Calu3 (cell line): ENCODE measurements at regions of chr12 and their contacts with region 1.

Region 1: DNA sequence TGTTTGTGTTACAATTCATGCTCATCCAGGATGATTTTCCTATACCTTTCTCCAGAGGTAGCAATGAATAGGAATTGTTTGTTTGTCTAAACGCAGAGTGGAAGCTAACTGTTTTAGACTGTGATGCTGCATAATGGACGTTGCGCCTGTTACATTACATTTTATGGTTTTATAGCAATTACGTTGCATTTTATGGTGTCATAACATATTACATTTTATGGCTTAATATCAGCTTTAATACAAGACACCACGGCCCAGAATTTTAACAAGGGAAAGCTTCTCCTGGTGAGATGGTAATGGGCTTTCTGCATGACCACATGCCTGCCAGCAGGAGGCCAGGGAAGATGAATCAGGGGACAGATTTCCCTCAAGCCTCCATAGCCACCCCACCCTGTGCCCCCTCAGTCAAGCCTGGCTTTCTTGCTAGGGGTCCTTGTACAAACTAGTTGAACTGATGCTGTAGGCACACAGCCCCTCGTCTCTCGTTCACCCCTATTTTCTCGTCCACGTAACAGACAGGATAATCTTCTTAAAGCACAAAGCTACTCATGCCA is 56.5 kb downstream of the HSPB8 start:
- DNase-seq: peak; percentile 7
- H3K4me3 Mint-ChIP-seq: no peak overlapping the region
- H3K27ac Mint-ChIP-seq: no peak overlapping the region
- H3K4me1 Mint-ChIP-seq: no peaks in the 10 kb centered on the region
- H3K27me3 Mint-ChIP-seq: peaks cover 79% of the 10 kb centered on the region
- CTCF ChIP-seq: no peak

Region 2: GRCh38 chr12:119115296-119115905 is 119.9 kb before region 1 on chr12:
- CTCF ChIA-PET with region 1: no interaction called
- intact Hi-C with region 1: loop called (anchors 5 kb)
- DNase-seq: peak; percentile 63
- H3K4me3 Mint-ChIP-seq: no peak overlapping the region
- H3K27ac Mint-ChIP-seq: no peak overlapping the region
- H3K4me1 Mint-ChIP-seq: no peaks in the 10 kb centered on the region
- H3K27me3 Mint-ChIP-seq: peaks cover 28% of the 10 kb centered on the region
- CTCF ChIP-seq: peak; percentile 87

Region 3: DNA sequence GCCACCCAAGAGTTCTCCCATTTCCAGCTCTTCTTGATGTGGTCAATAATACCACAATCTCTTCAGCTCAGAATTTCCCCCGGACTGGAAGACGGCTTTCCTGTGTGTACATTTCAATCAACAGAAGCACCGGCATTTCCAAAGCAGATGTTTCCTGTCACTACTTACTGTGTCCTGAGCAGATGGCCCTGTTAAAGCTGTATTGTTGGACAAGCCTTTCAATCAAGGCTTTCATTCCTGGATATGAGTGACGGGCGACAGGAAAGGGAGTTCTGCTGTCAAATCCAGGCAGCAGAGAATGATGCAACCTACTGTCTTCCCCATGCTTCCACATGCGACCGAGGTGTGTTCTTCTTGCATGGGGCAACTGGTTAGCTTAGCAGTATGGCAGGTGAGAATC is 22.9 kb after region 1 on chr12:
- CTCF ChIA-PET with region 1: no interaction called
- intact Hi-C with region 1: no loop called
- DNase-seq: no peak
- H3K4me3 Mint-ChIP-seq: no peak overlapping the region
- H3K27ac Mint-ChIP-seq: no peak overlapping the region
- H3K4me1 Mint-ChIP-seq: no peaks in the 10 kb centered on the region
- H3K27me3 Mint-ChIP-seq: peaks cover 26% of the 10 kb centered on the region
- CTCF ChIP-seq: no peak

Region 4: DNA sequence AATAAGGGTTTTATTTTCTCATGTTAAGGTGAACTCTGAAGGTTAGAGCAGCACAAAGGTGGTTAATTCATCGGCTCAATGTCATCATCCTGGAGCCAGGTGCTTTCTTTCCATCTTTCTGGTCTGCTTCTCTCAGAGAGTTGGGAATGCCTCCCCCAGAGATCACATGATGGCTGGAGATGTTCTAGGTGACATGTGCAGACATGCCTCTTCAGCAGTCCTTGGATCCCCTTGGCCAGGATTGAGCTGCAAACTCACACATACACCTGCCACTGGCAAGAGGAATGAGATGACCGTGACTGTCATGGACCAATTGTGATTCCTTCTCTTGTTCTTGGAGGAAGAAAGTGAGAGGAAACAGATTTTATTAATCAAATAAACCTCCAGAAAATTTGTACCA is 152.7 kb after region 1 on chr12:
- CTCF ChIA-PET with region 1: no interaction called
- intact Hi-C with region 1: no loop called
- DNase-seq: no peak
- H3K4me3 Mint-ChIP-seq: no peak overlapping the region
- H3K27ac Mint-ChIP-seq: no peak overlapping the region
- H3K4me1 Mint-ChIP-seq: no peaks in the 10 kb centered on the region
- H3K27me3 Mint-ChIP-seq: peaks cover 26% of the 10 kb centered on the region
- CTCF ChIP-seq: no peak

Region 5: GRCh38 chr12:119412811-119413794 is 177.8 kb after region 1 on chr12:
- CTCF ChIA-PET with region 1: no interaction called
- intact Hi-C with region 1: no loop called
- DNase-seq: peak; percentile 67
- H3K4me3 Mint-ChIP-seq: no peak overlapping the region
- H3K27ac Mint-ChIP-seq: no peak overlapping the region
- H3K4me1 Mint-ChIP-seq: no peaks in the 10 kb centered on the region
- H3K27me3 Mint-ChIP-seq: peaks cover 83% of the 10 kb centered on the region
- CTCF ChIP-seq: peak; percentile 76